MCF 10A (cell line): ENCODE measurements at regions of chr20 and their contacts with region 1.

Region 1: DNA sequence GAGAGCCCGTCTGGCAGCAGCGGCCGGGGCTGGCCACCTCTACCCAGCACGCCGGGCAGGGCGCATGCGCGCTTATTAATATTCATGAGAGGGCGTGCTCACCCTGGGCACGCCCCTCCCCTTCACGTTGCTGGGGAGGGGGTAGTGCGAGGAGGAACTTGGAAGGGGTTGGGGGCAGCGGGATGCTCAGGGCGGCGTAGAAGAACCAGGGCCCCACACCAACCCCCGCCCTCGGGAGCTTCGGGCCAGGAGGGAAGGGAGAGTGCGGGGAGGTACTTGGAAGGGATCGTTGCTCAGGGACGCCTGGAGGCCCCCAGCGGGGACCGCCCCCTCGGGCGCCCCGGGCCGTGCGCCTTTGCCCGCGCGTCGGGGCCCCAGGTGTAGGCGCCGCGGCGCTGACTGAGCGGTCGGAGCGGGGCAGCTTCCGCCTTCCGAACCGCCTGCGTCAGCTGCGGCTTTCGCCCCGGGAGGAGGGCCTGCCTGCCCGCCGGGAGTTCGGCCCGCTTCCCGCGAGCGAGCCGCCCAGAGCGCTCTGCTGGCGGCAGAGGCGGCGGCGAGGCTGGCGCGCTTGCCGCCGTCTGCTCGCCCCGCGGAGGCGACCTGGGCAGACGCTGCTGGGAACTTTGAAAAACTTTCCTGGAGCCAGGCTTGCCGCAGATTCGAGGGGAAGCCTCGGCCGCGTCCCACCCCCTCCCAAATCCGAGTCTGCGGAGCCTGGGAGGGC is at the start of gene JAG1:
- DNase-seq: peak; percentile 95
- H3K4me3 Mint-ChIP-seq: peak within 1 kb of the TSS; percentile 98
- H3K27ac Mint-ChIP-seq: peak within 1 kb of the TSS; percentile 91
- H3K4me1 Mint-ChIP-seq: peaks cover 29% of the 10 kb centered on the region
- H3K27me3 Mint-ChIP-seq: no peaks in the 10 kb centered on the region
- CTCF ChIP-seq: no peak
- total RNA-seq, gene JAG1: 62.5 and 88.0 TPM in 2 replicates

Region 2: GRCh38 chr20:10219452-10219791 is 454.7 kb before region 1 on chr20:
- CTCF ChIA-PET with region 1: no interaction called
- POLR2A ChIA-PET with region 1: no interaction called
- intact Hi-C with region 1: no loop called
- DNase-seq: peak; percentile 63
- H3K4me3 Mint-ChIP-seq: peak overlapping the region; percentile 40
- H3K27ac Mint-ChIP-seq: no peak overlapping the region
- H3K4me1 Mint-ChIP-seq: peaks cover 5% of the 10 kb centered on the region
- H3K27me3 Mint-ChIP-seq: peaks cover 67% of the 10 kb centered on the region
- CTCF ChIP-seq: no peak

Region 3: GRCh38 chr20:10352934-10353866 is 320.9 kb before region 1 on chr20:
- CTCF ChIA-PET with region 1: no interaction called
- POLR2A ChIA-PET with region 1: no interaction called
- intact Hi-C with region 1: no loop called
- DNase-seq: peak; percentile 31
- H3K4me3 Mint-ChIP-seq: no peak overlapping the region
- H3K27ac Mint-ChIP-seq: no peak overlapping the region
- H3K4me1 Mint-ChIP-seq: peaks cover 16% of the 10 kb centered on the region
- H3K27me3 Mint-ChIP-seq: no peaks in the 10 kb centered on the region
- CTCF ChIP-seq: no peak

Region 4: DNA sequence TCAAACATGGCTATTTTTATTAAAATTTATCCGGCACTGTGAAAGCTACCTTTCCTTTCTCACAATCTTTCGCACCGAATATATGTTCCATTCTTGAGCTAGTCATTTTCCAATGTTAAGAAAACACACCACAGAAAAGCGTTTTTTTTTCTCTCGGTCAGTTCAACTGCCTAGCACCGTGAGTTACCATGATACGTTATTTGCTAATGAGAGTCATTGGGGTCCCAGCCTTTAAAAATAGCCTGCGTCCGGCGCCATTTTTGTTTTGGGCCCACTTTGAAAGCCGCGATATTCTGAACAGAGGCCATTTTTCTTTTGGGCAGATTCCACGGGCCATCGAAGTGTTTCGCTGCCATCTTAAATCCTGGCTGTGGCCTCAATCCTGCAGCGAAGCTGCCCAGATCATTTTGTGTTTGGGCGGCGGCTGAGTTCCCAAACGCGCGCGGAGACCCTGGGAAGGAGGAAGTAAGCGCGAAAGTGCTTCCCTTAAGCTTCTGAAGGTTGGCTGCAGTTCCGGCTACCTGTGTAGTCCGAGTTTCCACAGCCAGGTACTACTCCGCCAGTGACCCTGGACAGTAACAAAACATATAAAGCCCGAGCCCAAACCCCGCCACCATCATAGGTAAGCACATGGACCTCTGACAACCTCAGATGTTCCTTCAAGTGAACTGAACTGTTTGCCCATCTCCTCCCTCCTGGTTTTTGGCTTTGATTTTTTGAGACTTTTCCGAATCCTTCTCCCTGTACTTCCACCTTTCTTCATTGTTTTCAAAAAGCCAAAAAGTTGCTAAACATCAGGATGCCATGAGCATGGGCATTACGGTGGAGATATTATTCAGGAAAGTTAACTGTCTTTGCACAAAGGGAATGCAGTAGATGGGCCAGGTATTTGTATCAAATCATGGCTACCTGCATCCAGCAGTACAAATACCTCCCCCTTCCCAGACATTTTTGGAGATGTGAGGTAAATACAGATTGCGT is 239.0 kb before region 1 on chr20 and contains the start of gene SLX4IP:
- CTCF ChIA-PET with region 1: interaction called, 7 read pairs
- POLR2A ChIA-PET with region 1: interaction called, 61 read pairs
- intact Hi-C with region 1: no loop called
- DNase-seq: peak; percentile 97
- H3K4me3 Mint-ChIP-seq: peak within 1 kb of the TSS; percentile 86
- H3K27ac Mint-ChIP-seq: peak within 1 kb of the TSS; percentile 94
- H3K4me1 Mint-ChIP-seq: peaks cover 12% of the 10 kb centered on the region
- H3K27me3 Mint-ChIP-seq: no peaks in the 10 kb centered on the region
- CTCF ChIP-seq: no peak
- total RNA-seq, gene SLX4IP: 11.2 and 12.9 TPM in 2 replicates

Region 5: GRCh38 chr20:10492065-10492464 is 182.1 kb before region 1 on chr20:
- CTCF ChIA-PET with region 1: no interaction called
- POLR2A ChIA-PET with region 1: no interaction called
- intact Hi-C with region 1: no loop called
- DNase-seq: peak; percentile 62
- H3K4me3 Mint-ChIP-seq: no peak overlapping the region
- H3K27ac Mint-ChIP-seq: peak overlapping the region; percentile 16
- H3K4me1 Mint-ChIP-seq: peaks cover 17% of the 10 kb centered on the region
- H3K27me3 Mint-ChIP-seq: no peaks in the 10 kb centered on the region
- CTCF ChIP-seq: no peak

Region 6: DNA sequence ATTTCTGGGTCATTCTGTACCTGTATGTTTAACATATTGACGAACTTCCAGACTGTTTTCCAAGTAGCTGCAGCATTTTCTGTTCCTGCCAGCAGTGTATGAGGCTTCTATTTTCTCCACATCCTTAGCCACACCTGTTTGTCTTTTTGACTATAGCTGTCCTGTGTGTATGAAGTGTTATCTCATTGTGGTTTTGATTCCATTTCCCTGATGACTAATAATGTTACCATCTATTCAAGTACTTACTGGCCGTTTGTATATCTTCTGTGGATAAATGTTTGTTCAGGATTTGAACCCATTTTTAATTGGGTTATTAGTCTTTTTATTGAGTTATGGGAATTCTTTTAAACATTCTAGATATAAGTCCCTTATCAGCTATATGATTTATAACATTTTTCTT is 95.5 kb before region 1 on chr20:
- CTCF ChIA-PET with region 1: interaction called, 10 read pairs
- POLR2A ChIA-PET with region 1: interaction called, 5 read pairs
- intact Hi-C with region 1: no loop called
- DNase-seq: peak; percentile 54
- H3K4me3 Mint-ChIP-seq: no peak overlapping the region
- H3K27ac Mint-ChIP-seq: peak overlapping the region; percentile 71
- H3K4me1 Mint-ChIP-seq: peaks cover 32% of the 10 kb centered on the region
- H3K27me3 Mint-ChIP-seq: no peaks in the 10 kb centered on the region
- CTCF ChIP-seq: no peak

Region 7: DNA sequence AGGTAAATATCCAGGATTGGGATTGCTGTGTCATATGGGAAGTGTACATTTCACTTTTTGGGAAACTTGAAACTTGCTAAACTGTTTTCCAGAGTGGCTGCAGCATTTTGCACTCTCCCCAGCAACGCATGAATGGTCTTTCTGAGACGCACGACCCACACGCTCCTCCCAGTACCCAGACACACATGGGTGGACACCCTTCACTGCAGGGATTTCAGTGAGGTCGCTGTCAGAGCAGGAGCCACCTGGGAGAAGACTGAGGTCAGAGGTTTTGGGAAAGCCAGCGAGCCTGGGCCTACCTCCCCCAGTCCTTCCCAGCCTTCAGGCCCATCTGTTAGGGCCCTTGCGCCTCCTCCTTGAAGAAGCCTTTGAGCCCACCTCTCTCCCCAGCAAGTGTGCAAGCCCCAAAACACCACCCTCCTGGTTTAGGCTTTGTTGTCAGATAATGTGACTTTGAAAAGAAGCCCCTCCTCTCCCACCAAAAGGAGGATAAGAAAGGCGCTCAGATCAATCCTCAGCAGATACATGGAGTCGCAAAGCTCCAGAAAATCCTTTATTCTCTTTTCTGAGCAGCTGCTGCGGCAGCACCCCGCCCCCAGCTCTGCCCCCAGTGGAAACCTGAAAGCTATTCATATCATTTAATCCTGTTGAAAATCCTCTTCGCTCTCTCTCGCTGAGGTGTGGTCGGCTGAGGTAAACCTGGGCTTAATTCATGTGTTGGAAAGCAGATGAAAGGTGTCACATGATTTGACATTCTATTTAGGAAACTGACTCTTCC is 12.4 kb after region 1 on chr20:
- CTCF ChIA-PET with region 1: interaction called, 15 read pairs
- POLR2A ChIA-PET with region 1: interaction called, 9 read pairs
- intact Hi-C with region 1: no loop called
- DNase-seq: no peak
- H3K4me3 Mint-ChIP-seq: no peak overlapping the region
- H3K27ac Mint-ChIP-seq: no peak overlapping the region
- H3K4me1 Mint-ChIP-seq: no peaks in the 10 kb centered on the region
- H3K27me3 Mint-ChIP-seq: no peaks in the 10 kb centered on the region
- CTCF ChIP-seq: no peak

Region 8: GRCh38 chr20:10864076-10864918 is 190.1 kb after region 1 on chr20:
- CTCF ChIA-PET with region 1: interaction called, 7 read pairs
- POLR2A ChIA-PET with region 1: interaction called, 29 read pairs
- intact Hi-C with region 1: loop called (anchors 1 kb)
- DNase-seq: peak; percentile 45
- H3K4me3 Mint-ChIP-seq: peak overlapping the region; percentile 54
- H3K27ac Mint-ChIP-seq: peak overlapping the region; percentile 91
- H3K4me1 Mint-ChIP-seq: peaks cover 56% of the 10 kb centered on the region
- H3K27me3 Mint-ChIP-seq: no peaks in the 10 kb centered on the region
- CTCF ChIP-seq: no peak

Region 9: GRCh38 chr20:11178946-11179654 is 504.9 kb after region 1 on chr20:
- CTCF ChIA-PET with region 1: interaction called, 3 read pairs
- POLR2A ChIA-PET with region 1: interaction called, 14 read pairs
- intact Hi-C with region 1: no loop called
- DNase-seq: peak; percentile 77
- H3K4me3 Mint-ChIP-seq: no peak overlapping the region
- H3K27ac Mint-ChIP-seq: no peak overlapping the region
- H3K4me1 Mint-ChIP-seq: peaks cover 10% of the 10 kb centered on the region
- H3K27me3 Mint-ChIP-seq: no peaks in the 10 kb centered on the region
- CTCF ChIP-seq: peak; percentile 20

Region 10: GRCh38 chr20:11296951-11297350 is 622.8 kb after region 1 on chr20:
- CTCF ChIA-PET with region 1: no interaction called
- POLR2A ChIA-PET with region 1: no interaction called
- intact Hi-C with region 1: no loop called
- DNase-seq: peak; percentile 12
- H3K4me3 Mint-ChIP-seq: no peak overlapping the region
- H3K27ac Mint-ChIP-seq: no peak overlapping the region
- H3K4me1 Mint-ChIP-seq: peaks cover 9% of the 10 kb centered on the region
- H3K27me3 Mint-ChIP-seq: no peaks in the 10 kb centered on the region
- CTCF ChIP-seq: no peak